Aorta (tissue), 5 donors: ENCODE measurements at regions of chr7 and their contacts with region 1.

Region 1: GRCh38 chr7:139731802-139732470 is 45.9 kb downstream of the HIPK2 start:
- DNase-seq: peak; percentile 90 to 94
- ATAC-seq: peak; percentile 86
- H3K4me3 ChIP-seq: no peak overlapping the region
- H3K27ac ChIP-seq: peak overlapping the region; percentile 96 to 98
- H3K4me1 ChIP-seq: peaks cover 7 to 9% of the 10 kb centered on the region in 2 donors
- H3K27me3 ChIP-seq: no peaks in the 10 kb centered on the region

Region 2: DNA sequence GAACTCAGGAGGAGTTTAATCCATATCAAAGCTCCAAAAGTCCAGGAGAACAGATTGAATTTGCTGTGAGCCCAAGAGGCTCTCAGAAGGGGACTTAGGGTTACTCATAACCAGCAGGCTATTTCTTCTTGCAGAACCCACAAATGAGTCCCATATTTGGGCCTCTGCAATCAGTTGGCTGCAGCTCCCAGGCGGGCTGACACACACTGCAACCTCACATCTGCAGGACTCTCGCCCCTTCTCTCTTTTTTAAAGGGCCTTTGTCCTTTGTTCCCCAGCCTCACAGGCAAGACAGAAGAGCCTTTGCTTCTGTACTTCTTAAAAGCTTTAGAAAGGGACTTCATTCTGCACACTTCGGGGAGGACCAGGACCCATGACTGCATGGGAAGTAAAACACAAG is 1756.7 kb before region 1 on chr7:
- intact Hi-C with region 1: loop called in 1 of 2 experiments (anchors 10 kb)
- DNase-seq: peak in 1 of 2 donors; percentile 72
- ATAC-seq: peak; percentile 51
- H3K4me3 ChIP-seq: no peak overlapping the region
- H3K27ac ChIP-seq: peak overlapping the region; percentile 79 to 98
- H3K4me1 ChIP-seq: peaks cover 7 to 16% of the 10 kb centered on the region in 2 donors
- H3K27me3 ChIP-seq: no peaks in the 10 kb centered on the region

Region 3: DNA sequence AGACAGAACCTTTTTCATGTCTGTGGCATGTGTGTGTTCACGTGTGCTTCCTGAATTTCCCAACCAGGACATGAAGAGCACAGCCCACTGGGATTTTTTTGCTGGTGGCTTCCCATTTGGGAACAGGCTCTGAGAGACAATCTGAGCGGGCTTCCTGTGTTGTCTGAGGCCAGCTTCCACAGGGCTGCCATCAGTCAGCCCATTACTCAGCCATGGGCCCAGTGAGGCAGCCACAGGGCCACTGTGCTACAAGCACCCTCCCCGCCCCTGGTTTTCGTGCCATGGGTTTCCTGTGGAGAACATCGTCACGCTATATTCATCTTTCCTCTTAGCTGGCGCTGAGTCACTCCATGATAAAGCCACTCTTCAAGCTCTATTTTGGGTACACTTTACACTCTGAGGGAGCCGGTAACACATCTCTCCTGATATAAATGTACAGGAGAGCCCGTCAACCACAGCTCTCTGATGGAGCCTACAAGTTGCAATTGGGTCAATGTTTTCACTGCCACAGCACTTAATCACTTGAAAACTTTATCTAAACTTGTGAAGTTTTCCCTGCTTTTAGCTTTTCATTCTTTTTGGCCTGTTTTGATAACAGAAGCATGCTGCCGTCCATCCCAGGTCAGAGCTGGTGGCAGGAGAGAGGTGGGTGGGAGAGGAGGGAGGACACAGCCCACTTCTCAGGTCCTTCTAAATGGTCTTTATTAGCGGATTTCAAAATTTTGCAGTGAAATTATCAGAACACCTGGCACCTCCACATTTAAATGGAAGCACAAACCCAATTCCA is 51.1 kb before region 1 on chr7:
- intact Hi-C with region 1: loop called (anchors 2 to 5 kb)
- DNase-seq: peak; percentile 87 to 94
- ATAC-seq: peak; percentile 84
- H3K4me3 ChIP-seq: no peak overlapping the region
- H3K27ac ChIP-seq: peak overlapping the region; percentile 80 to 95
- H3K4me1 ChIP-seq: peaks cover 0 to 16% of the 10 kb centered on the region in 2 donors
- H3K27me3 ChIP-seq: no peaks in the 10 kb centered on the region